ENCODE measurements at regions of chr16 and their contacts with region 1.

Region 1: GRCh38 chr16:51951668-51952298 is 595.2 kb downstream of the TOX3 start:
- DNase-seq: no peak
- ATAC-seq: no peak
- H3K4me3 ChIP-seq: no peak overlapping the region
- H3K27ac ChIP-seq: no peak overlapping the region
- H3K4me1 ChIP-seq: peaks cover 4% of the 10 kb centered on the region; the same call in 1 of the 2 replicates
- H3K27me3 ChIP-seq: no peaks in the 10 kb centered on the region
- CTCF ChIP-seq: no peak
- POLR2A ChIP-seq: no peak
- RAD21 ChIP-seq: no peak

Region 2: DNA sequence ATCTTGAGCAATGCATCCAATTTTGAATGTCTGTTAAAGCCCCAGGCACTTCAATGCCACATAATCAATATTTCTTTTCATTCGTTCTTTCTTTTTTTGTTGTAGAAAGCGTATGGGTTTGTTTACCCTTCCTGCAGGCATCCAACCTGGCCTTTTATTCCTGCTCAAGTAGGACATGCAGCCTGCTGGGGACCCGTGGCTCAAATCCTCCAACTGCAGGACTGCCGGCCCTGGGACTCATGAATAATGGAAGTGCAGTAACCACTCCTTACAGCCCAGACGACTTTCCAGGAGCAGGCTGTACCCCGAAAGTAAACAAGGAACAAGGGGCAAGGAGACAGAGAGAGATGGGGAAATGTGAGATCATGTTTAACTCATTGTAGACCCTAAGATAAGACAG is 927.1 kb before region 1 on chr16:
- CTCF ChIA-PET with region 1: no interaction called
- POLR2A ChIA-PET with region 1: no interaction called
- dilution Hi-C with region 1: no loop called
- in situ Hi-C with region 1: no loop called
- intact Hi-C with region 1: no loop called
- DNase-seq: no peak
- ATAC-seq: no peak
- H3K4me3 ChIP-seq: no peak overlapping the region
- H3K27ac ChIP-seq: no peak overlapping the region
- H3K4me1 ChIP-seq: no peaks in the 10 kb centered on the region
- H3K27me3 ChIP-seq: no peaks in the 10 kb centered on the region
- CTCF ChIP-seq: no peak
- POLR2A ChIP-seq: no peak
- RAD21 ChIP-seq: no peak

Region 3: GRCh38 chr16:51907680-51908079 is 44.1 kb before region 1 on chr16:
- CTCF ChIA-PET with region 1: no interaction called
- POLR2A ChIA-PET with region 1: no interaction called
- dilution Hi-C with region 1: no loop called
- in situ Hi-C with region 1: no loop called
- intact Hi-C with region 1: loop called (anchors 5 kb)
- DNase-seq: peak; percentile 8
- ATAC-seq: no peak
- H3K4me3 ChIP-seq: no peak overlapping the region
- H3K27ac ChIP-seq: no peak overlapping the region
- H3K4me1 ChIP-seq: no peaks in the 10 kb centered on the region
- H3K27me3 ChIP-seq: no peaks in the 10 kb centered on the region
- CTCF ChIP-seq: no peak
- POLR2A ChIP-seq: no peak
- RAD21 ChIP-seq: no peak

Region 4: GRCh38 chr16:51982715-51983680 is 31.2 kb after region 1 on chr16:
- CTCF ChIA-PET with region 1: no interaction called
- POLR2A ChIA-PET with region 1: no interaction called
- dilution Hi-C with region 1: no loop called
- in situ Hi-C with region 1: no loop called
- intact Hi-C with region 1: no loop called
- DNase-seq: peak; percentile 78
- ATAC-seq: peak; percentile 72
- H3K4me3 ChIP-seq: no peak overlapping the region
- H3K27ac ChIP-seq: no peak overlapping the region
- H3K4me1 ChIP-seq: no peaks in the 10 kb centered on the region; the same call in 1 of the 2 replicates
- H3K27me3 ChIP-seq: no peaks in the 10 kb centered on the region
- CTCF ChIP-seq: peak; percentile 90
- POLR2A ChIP-seq: no peak
- RAD21 ChIP-seq: peak; percentile 96

Region 5: GRCh38 chr16:52068447-52069074 is 116.8 kb after region 1 on chr16:
- CTCF ChIA-PET with region 1: no interaction called
- POLR2A ChIA-PET with region 1: no interaction called
- dilution Hi-C with region 1: no loop called
- in situ Hi-C with region 1: no loop called
- intact Hi-C with region 1: no loop called
- DNase-seq: peak; percentile 10
- ATAC-seq: no peak
- H3K4me3 ChIP-seq: no peak overlapping the region
- H3K27ac ChIP-seq: no peak overlapping the region
- H3K4me1 ChIP-seq: no peaks in the 10 kb centered on the region
- H3K27me3 ChIP-seq: no peaks in the 10 kb centered on the region
- CTCF ChIP-seq: peak; percentile 18; the same call in 1 of the 2 replicates
- POLR2A ChIP-seq: no peak
- RAD21 ChIP-seq: peak; percentile 16; the same call in 1 of the 2 replicates

Measured in IMR-90 (cell line).